A549 (cell line): ENCODE measurements at regions of chr2 and their contacts with region 1.

Region 1: DNA sequence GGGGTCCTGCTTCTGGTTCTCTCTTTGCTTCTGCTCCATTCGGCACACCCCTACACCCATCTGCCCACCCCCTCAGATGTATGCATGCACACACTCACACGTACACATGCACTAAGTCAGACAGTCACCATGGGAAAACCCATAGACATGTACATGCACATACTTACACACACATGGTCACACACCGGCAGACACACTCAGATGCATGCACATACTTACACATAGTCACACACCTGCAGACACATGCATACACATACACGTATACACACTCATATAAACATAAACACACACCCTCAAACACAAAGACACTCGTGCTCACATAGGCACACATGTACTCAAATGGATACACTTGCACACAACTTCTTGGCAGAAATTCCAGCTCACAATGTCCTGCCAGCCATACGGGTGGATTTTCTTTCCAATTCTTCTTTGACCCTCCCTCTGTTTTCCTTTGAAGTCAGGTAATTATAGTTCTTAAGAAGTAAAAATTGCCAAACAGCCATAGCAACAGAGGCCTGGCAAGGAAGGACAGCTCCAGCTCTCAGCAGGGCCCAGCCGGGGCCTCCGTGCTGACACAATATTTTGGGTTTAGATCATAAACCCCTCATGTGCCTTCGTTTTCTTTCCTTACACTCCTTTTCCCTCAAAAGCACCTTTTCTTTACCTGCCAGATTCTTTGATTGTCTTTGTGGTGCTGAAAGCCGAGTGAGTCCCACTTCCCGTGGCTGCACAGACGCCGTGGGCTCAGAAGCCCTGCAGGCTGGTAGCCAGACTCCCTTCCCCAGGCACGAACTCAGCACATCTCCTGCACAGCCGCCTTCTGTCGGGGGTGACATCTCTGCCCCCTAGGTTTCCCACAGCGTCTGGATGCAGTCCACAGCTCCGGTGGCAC is 195.7 kb downstream of the ARL4C start:
- DNase-seq: no peak
- ATAC-seq: no peak
- H3K4me3 ChIP-seq: no peak overlapping the region
- H3K27ac ChIP-seq: peak overlapping the region; percentile 88 to 94; a peak in 4 of 6 replicates
- H3K4me1 ChIP-seq: peaks cover 48% of the 10 kb centered on the region
- CTCF ChIP-seq: no peak
- EP300 ChIP-seq: no peak
- POLR2A ChIP-seq: no peak
- RAD21 ChIP-seq: no peak

Region 2: GRCh38 chr2:234288974-234289455 is 12.2 kb before region 1 on chr2:
- CTCF ChIA-PET with region 1: interaction called, 11 read pairs
- POLR2A ChIA-PET with region 1: interaction called, 4 read pairs
- DNase-seq: peak; percentile 33 to 70
- ATAC-seq: peak; percentile 60 to 74; a peak in 3 of 6 replicates
- H3K4me3 ChIP-seq: no peak overlapping the region
- H3K27ac ChIP-seq: peak overlapping the region; percentile 55 to 83
- H3K4me1 ChIP-seq: peaks cover 46% of the 10 kb centered on the region
- CTCF ChIP-seq: peak; percentile 63
- EP300 ChIP-seq: no peak
- POLR2A ChIP-seq: no peak
- RAD21 ChIP-seq: peak; percentile 66 to 74